PC-9 (cell line): ENCODE measurements at regions of chr17 and their contacts with region 1.

Region 1: GRCh38 chr17:50094753-50095619 is at the start of gene PDK2:
- DNase-seq: peak; percentile 92 to 97
- H3K4me3 ChIP-seq: peak within 1 kb of the TSS; percentile 88
- H3K27ac ChIP-seq: peak within 1 kb of the TSS; percentile 12; the same call in 1 of the 2 replicates
- H3K4me1 ChIP-seq: peaks cover 18% of the 10 kb centered on the region
- H3K27me3 ChIP-seq: no peaks in the 10 kb centered on the region
- CTCF ChIP-seq: no peak
- total RNA-seq, gene PDK2: 38.6 and 58.7 TPM in 2 replicates

Region 2: GRCh38 chr17:48831549-48831883 is 1263.5 kb before region 1 on chr17:
- CTCF ChIA-PET with region 1: no interaction called
- POLR2A ChIA-PET with region 1: interaction called, 10 read pairs
- intact Hi-C with region 1: no loop called
- DNase-seq: no peak
- H3K4me3 ChIP-seq: peak overlapping the region; percentile 95
- H3K27ac ChIP-seq: peak overlapping the region; percentile 69
- H3K4me1 ChIP-seq: peaks cover 14% of the 10 kb centered on the region
- H3K27me3 ChIP-seq: no peaks in the 10 kb centered on the region
- CTCF ChIP-seq: no peak

Region 3: DNA sequence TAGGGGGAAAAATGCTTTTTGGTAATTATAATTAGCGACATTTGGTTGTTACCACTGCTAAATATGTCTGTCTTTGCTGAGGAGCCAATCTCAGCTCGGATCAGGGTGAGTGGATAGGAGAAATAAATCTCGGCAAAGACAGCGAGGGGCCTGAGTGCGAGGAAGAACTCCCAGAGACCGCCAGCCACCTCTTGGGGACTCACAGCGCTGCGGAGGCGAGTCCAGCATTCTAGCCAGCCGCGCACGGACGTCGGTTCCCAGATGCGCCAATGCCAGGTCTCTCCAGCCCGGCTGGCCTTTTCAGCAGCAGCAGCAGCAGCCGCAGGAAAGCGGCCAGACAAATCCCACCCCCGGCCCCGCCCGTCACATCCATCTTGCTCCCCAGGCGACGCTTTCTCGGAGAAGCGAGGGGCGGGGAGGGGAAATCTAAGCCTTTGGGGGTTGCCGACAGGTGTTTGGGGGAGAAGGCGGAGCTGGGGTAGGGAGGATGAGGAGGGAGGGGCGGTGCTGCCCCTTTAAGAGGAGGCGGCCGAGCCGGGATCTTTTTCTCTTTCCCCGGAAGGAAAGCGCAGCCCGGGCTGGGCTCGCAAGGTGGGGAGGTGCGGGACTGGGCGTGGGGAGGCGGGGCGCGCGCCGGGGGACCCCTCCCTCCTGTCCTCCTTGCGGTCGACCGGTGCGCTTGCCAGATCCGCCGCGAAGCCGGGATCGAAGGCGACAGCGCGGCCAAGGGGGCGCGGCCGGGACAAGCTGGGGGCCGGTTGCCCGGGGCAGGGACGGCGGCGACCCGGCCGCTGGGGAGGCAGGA is 39.4 kb before region 1 on chr17 and contains the start of gene ITGA3:
- CTCF ChIA-PET with region 1: interaction called, 5 read pairs
- POLR2A ChIA-PET with region 1: no interaction called
- intact Hi-C with region 1: loop called (anchors 2 kb)
- DNase-seq: peak; percentile 96 to 97
- H3K4me3 ChIP-seq: peak within 1 kb of the TSS; percentile 79
- H3K27ac ChIP-seq: peak within 1 kb of the TSS; percentile 97
- H3K4me1 ChIP-seq: peaks cover 69% of the 10 kb centered on the region
- H3K27me3 ChIP-seq: no peaks in the 10 kb centered on the region
- CTCF ChIP-seq: peak; percentile 12; the same call in 1 of the 2 replicates
- total RNA-seq, gene ITGA3: 291 and 327 TPM in 2 replicates

Region 4: GRCh38 chr17:50161023-50161910 is 66.3 kb after region 1 on chr17:
- CTCF ChIA-PET with region 1: interaction called, 3 read pairs
- POLR2A ChIA-PET with region 1: no interaction called
- intact Hi-C with region 1: loop called (anchors 1 kb)
- DNase-seq: peak; percentile 74 to 91
- H3K4me3 ChIP-seq: peak overlapping the region; percentile 59
- H3K27ac ChIP-seq: no peak overlapping the region
- H3K4me1 ChIP-seq: peaks cover 5% of the 10 kb centered on the region
- H3K27me3 ChIP-seq: no peaks in the 10 kb centered on the region
- CTCF ChIP-seq: peak; percentile 88

Region 5: GRCh38 chr17:50297407-50297865 is 202.4 kb after region 1 on chr17:
- CTCF ChIA-PET with region 1: interaction called, 22 read pairs
- POLR2A ChIA-PET with region 1: no interaction called
- intact Hi-C with region 1: loop called (anchors 2 kb)
- DNase-seq: peak; percentile 47 to 81
- H3K4me3 ChIP-seq: no peak overlapping the region
- H3K27ac ChIP-seq: no peak overlapping the region
- H3K4me1 ChIP-seq: no peaks in the 10 kb centered on the region
- H3K27me3 ChIP-seq: no peaks in the 10 kb centered on the region
- CTCF ChIP-seq: peak; percentile 94

Region 6: DNA sequence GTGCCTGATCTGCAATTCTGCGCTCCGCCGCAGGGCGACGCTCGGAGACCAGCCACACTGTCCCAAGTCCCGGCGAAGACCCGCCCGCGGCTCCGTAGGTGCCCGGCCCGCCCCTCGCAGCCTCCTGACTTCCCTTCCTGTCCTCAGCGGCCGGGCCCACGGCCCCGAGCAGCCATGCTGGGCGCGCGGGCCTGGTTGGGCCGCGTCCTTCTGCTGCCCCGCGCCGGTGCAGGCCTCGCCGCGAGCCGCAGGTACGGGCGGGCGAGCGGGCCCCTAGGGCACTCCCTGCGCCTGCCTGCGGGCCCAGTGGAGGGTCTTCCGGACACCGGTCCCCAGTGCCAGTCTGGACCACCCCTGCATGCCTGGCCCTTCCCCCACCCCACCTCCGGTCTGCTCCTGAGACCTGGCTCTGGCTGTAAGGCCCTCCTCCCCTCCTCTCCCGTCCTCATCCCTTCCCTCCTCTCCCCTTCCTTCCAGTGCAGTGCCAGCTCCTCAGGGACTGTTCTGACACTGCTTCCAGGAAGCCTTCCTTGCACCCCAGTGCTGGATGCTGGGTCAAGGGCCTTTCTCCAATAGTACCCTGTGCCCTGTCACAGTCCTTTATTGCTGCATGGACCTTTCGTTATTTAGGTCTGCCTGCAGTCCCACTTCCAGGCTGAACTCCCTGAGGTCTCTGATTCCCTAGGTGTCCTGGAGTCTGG is 452.2 kb after region 1 on chr17 and contains the start of gene SPATA20:
- CTCF ChIA-PET with region 1: no interaction called
- POLR2A ChIA-PET with region 1: no interaction called
- intact Hi-C with region 1: no loop called
- DNase-seq: peak; percentile 82 to 89
- H3K4me3 ChIP-seq: peak within 1 kb of the TSS; percentile 68
- H3K27ac ChIP-seq: no peak within 1 kb of the TSS
- H3K4me1 ChIP-seq: peaks cover 17% of the 10 kb centered on the region
- H3K27me3 ChIP-seq: no peaks in the 10 kb centered on the region
- CTCF ChIP-seq: peak; percentile 99
- total RNA-seq, gene SPATA20: 41.5 and 60.5 TPM in 2 replicates

Region 7: GRCh38 chr17:50603340-50603739 is 508.4 kb after region 1 on chr17:
- CTCF ChIA-PET with region 1: no interaction called
- POLR2A ChIA-PET with region 1: no interaction called
- intact Hi-C with region 1: no loop called
- DNase-seq: no peak
- H3K4me3 ChIP-seq: no peak overlapping the region
- H3K27ac ChIP-seq: no peak overlapping the region
- H3K4me1 ChIP-seq: no peaks in the 10 kb centered on the region
- H3K27me3 ChIP-seq: peaks cover 89% of the 10 kb centered on the region
- CTCF ChIP-seq: peak; percentile 51